GM23248 (cell line): ENCODE measurements at regions of chr20 and their contacts with region 1.

Region 1: GRCh38 chr20:2859330-2860121 is 13.8 kb upstream of the PTPRA start:
- DNase-seq: peak; percentile 70
- H3K4me3 ChIP-seq: no peak overlapping the region
- H3K27ac ChIP-seq: peak overlapping the region; percentile 43
- H3K4me1 ChIP-seq: peaks cover 12% of the 10 kb centered on the region
- H3K27me3 ChIP-seq: no peaks in the 10 kb centered on the region

Region 2: GRCh38 chr20:2752567-2753460 is 106.7 kb before region 1 on chr20:
- in situ Hi-C with region 1: loop called (anchors 10 kb)
- DNase-seq: peak; percentile 70
- H3K4me3 ChIP-seq: peak overlapping the region; percentile 62
- H3K27ac ChIP-seq: no peak overlapping the region
- H3K4me1 ChIP-seq: peaks cover 7% of the 10 kb centered on the region
- H3K27me3 ChIP-seq: peaks cover 67% of the 10 kb centered on the region

Region 3: GRCh38 chr20:3101737-3102574 is 242.4 kb after region 1 on chr20:
- in situ Hi-C with region 1: no loop called
- DNase-seq: no peak
- H3K4me3 ChIP-seq: no peak overlapping the region
- H3K27ac ChIP-seq: no peak overlapping the region
- H3K4me1 ChIP-seq: no peaks in the 10 kb centered on the region
- H3K27me3 ChIP-seq: no peaks in the 10 kb centered on the region

Region 4: GRCh38 chr20:3430376-3431069 is 571.0 kb after region 1 on chr20:
- in situ Hi-C with region 1: no loop called
- DNase-seq: no peak
- H3K4me3 ChIP-seq: no peak overlapping the region
- H3K27ac ChIP-seq: no peak overlapping the region
- H3K4me1 ChIP-seq: no peaks in the 10 kb centered on the region
- H3K27me3 ChIP-seq: no peaks in the 10 kb centered on the region